ENCODE measurements at regions of chr11 and their contacts with region 1.

Region 1: DNA sequence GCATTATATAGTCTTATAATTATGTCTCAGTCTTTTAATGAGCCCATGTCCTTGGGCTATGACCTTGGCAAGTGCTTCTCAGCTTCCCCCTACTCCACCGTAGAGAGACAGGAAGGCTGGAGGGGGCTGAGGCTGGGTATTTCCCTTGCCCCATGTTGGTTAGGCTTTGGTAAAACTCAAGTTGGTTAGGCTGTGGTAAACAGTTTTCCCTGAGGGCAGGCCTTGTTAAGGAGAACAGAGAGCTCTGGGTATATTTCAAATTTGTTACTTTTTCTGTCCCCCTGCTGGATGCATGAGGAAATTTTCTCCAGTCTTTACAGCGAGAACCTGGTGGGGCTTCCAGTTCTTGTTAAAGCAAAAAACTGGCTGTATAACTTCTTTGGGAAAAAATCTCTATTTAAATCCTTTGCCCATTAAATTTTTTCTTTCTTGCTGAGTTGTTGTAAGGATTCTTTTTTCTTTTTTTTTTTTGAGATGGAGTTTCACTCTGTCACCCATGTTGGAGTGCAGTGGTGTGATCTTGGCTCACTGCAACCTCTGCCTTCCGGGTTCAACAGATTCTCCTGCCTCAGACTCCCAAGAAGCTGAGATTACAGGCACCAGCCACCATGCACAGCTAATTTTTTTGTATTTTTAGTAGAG is 12.2 kb upstream of the DCHS1 start:
- DNase-seq: peak; percentile 45
- ATAC-seq: peak; percentile 71
- H3K4me3 Mint-ChIP-seq: no peak overlapping the region
- H3K27ac Mint-ChIP-seq: no peak overlapping the region
- H3K4me1 Mint-ChIP-seq: peaks cover 51% of the 10 kb centered on the region
- H3K27me3 Mint-ChIP-seq: no peaks in the 10 kb centered on the region

Region 2: DNA sequence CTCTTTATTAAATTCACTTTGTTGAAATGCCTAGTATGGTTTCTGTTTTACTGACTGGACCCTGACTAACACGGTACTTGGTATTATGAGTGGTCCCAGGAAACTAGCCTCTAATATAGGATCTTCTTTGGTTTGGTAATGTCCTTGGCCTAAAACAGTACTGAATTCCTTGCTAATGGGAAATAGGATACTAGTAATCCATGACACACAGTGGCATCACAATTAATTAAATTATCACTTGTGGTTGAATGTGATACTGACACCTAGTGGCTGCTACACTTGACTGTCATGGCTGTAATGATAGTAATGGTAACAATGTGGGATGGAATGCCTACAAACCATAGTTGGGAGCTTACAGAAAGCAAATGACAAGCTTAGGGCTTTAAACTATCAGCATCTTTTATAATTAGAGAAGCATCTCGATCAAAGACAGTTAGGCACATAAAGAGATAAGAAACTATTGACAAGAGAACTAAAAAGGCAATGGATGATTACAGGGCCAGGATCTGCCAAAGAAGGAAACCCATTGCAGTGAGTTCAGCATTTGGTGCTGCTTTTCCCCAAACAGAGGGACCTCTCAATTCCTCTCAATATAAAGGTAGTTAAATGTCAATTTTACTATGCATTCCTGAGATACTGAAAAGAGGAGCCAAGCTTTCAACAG is 162.1 kb before region 1 on chr11:
- CTCF ChIA-PET with region 1: no interaction called
- POLR2A ChIA-PET with region 1: interaction called, 12 read pairs
- intact Hi-C with region 1: no loop called
- DNase-seq: no peak
- ATAC-seq: peak; percentile 57
- H3K4me3 Mint-ChIP-seq: no peak overlapping the region
- H3K27ac Mint-ChIP-seq: no peak overlapping the region
- H3K4me1 Mint-ChIP-seq: no peaks in the 10 kb centered on the region
- H3K27me3 Mint-ChIP-seq: no peaks in the 10 kb centered on the region

Region 3: DNA sequence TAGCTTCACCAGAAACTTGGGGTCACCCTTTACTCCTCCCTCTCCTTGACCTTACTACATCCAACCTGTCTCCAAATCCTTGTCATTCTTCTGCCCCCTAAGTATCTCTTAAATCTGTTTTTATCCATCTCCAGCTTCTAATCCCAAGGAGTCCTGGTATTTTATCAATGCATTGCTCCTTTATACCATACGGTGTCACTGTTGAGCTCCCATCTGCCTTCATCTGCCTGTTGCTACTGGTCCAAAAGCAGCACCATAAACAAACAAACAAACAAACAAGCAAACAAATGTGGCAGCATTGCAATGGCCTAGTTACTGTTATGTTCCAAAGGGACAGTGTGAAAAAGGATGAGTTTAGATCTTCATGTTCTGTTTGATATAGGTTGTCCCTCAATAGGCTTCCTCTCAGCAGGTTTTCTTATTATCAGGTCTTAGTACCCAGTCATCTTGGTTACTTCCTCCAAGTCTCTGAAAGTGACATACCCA is 136.5 kb before region 1 on chr11:
- CTCF ChIA-PET with region 1: interaction called, 9 read pairs
- POLR2A ChIA-PET with region 1: no interaction called
- intact Hi-C with region 1: loop called in 1 of 2 experiments (anchors 1 kb)
- DNase-seq: peak; percentile 26
- ATAC-seq: peak; percentile 71
- H3K4me3 Mint-ChIP-seq: no peak overlapping the region
- H3K27ac Mint-ChIP-seq: no peak overlapping the region
- H3K4me1 Mint-ChIP-seq: peaks cover 11% of the 10 kb centered on the region
- H3K27me3 Mint-ChIP-seq: no peaks in the 10 kb centered on the region

Region 4: GRCh38 chr11:6619004-6619745 is 48.7 kb before region 1 on chr11 and contains the start of gene TPP1:
- CTCF ChIA-PET with region 1: interaction called, 15 read pairs
- POLR2A ChIA-PET with region 1: interaction called, 4 read pairs
- intact Hi-C with region 1: loop called (anchors 2 kb)
- DNase-seq: peak; percentile 91
- ATAC-seq: peak; percentile 93
- H3K4me3 Mint-ChIP-seq: no peak within 1 kb of the TSS
- H3K27ac Mint-ChIP-seq: no peak within 1 kb of the TSS
- H3K4me1 Mint-ChIP-seq: peaks cover 8% of the 10 kb centered on the region
- H3K27me3 Mint-ChIP-seq: no peaks in the 10 kb centered on the region
- total RNA-seq, gene TPP1: 38.1 to 47.9 TPM